Naive thymus-derived CD4-positive, alpha-beta T cell (primary cell): ENCODE measurements at regions of chr1 and their contacts with region 1.

Region 1: DNA sequence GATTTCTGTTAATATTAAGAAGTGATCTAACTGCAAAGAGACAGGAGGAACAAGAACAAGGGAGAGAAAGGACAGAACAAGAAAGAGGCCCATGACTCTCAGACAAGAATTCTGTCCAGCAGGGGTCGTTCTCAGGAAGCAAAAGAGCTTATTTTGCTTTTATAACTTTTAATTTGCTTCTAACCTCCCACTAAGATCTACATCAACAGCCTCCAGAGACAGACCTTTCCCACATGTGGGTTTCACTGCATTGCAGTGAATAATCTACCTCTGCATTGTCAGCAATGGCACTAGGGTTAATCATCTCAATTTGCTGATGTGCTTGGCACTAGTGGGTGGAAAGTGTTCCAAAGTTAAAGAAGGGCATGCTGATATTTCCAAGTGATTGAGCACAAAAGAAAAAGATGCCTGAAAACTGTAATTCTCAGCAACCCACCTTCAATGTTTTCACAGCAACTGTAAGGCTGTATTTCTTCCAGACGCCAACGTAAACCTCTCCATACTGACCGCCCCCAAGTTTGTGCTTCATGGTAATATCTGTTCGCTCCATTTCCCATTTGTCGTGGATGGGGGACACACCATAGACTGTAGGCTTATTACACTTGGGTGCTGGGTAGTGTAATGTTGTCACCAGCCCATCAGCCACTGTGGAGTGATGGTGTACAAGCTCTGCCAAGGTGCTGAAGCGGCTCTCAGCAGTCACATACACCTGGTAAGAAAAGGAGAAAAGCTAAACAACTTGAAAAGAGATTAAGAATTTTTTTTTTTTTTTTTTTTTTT is 39.5 kb downstream of the TOR3A start:
- DNase-seq: peak in 7 of 9 donors; percentile 22 to 58 (median 46)
- ATAC-seq: peak; percentile 47
- H3K4me3 ChIP-seq: no peak overlapping the region
- H3K4me3 Mint-ChIP-seq: no peak overlapping the region
- H3K27ac ChIP-seq: no peak overlapping the region
- H3K27ac Mint-ChIP-seq: no peak overlapping the region
- H3K4me1 ChIP-seq: no peaks in the 10 kb centered on the region
- H3K4me1 Mint-ChIP-seq: peaks cover 0 to 12% (median 3%) of the 10 kb centered on the region in 7 donors
- H3K27me3 ChIP-seq: no peaks in the 10 kb centered on the region
- H3K27me3 Mint-ChIP-seq: no peaks in the 10 kb centered on the region

Region 2: GRCh38 chr1:179194068-179194537 is 72.8 kb after region 1 on chr1:
- CTCF ChIA-PET with region 1: interaction called, 3 read pairs
- POLR2A ChIA-PET with region 1: no interaction called
- intact Hi-C with region 1: loop called (anchors 1 kb)
- DNase-seq: no peak
- ATAC-seq: no peak
- H3K4me3 ChIP-seq: no peak overlapping the region
- H3K4me3 Mint-ChIP-seq: no peak overlapping the region
- H3K27ac ChIP-seq: no peak overlapping the region
- H3K27ac Mint-ChIP-seq: peak overlapping the region in 1 of 9 donors; percentile 64
- H3K4me1 ChIP-seq: no peaks in the 10 kb centered on the region
- H3K4me1 Mint-ChIP-seq: peaks cover 14 to 33% (median 25%) of the 10 kb centered on the region in 7 donors
- H3K27me3 ChIP-seq: no peaks in the 10 kb centered on the region
- H3K27me3 Mint-ChIP-seq: no peaks in the 10 kb centered on the region

Region 3: DNA sequence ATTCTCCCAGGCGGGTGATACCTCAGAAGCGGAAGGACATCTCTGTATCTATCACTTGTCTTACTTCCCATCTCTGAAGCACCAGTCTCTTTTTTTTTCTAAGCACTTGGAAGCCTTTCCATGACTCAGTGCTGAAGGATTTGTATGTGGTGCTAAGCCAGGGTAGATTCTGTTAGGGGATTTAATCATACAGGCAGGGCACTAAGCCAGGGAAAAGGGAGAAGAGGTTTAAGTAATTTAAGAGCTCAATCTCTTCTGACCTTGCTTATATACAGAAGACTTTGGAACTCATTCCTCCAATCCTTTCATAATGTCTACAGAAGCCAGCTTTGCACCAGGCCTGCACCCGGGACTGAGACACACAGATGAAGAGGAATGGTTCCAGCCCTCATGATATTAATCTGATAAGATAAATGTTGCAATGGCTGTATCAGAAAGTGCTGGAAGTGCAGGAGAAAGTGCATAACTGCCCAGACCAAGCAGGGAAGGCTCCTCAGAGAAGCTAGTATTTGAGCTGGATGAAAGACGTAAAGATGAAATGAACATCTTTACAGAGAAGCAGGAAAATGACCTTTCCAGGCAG is 632.8 kb after region 1 on chr1:
- CTCF ChIA-PET with region 1: no interaction called
- POLR2A ChIA-PET with region 1: no interaction called
- intact Hi-C with region 1: no loop called
- DNase-seq: no peak
- ATAC-seq: no peak
- H3K4me3 ChIP-seq: no peak overlapping the region
- H3K4me3 Mint-ChIP-seq: no peak overlapping the region
- H3K27ac ChIP-seq: no peak overlapping the region
- H3K27ac Mint-ChIP-seq: no peak overlapping the region
- H3K4me1 ChIP-seq: no peaks in the 10 kb centered on the region
- H3K4me1 Mint-ChIP-seq: no peaks in the 10 kb centered on the region
- H3K27me3 ChIP-seq: no peaks in the 10 kb centered on the region
- H3K27me3 Mint-ChIP-seq: peaks cover 5 to 22% (median 17%) of the 10 kb centered on the region in 5 donors